Heart right ventricle (tissue), 16 donors: ENCODE measurements at regions of chr5 and their contacts with region 1.

Region 1: DNA sequence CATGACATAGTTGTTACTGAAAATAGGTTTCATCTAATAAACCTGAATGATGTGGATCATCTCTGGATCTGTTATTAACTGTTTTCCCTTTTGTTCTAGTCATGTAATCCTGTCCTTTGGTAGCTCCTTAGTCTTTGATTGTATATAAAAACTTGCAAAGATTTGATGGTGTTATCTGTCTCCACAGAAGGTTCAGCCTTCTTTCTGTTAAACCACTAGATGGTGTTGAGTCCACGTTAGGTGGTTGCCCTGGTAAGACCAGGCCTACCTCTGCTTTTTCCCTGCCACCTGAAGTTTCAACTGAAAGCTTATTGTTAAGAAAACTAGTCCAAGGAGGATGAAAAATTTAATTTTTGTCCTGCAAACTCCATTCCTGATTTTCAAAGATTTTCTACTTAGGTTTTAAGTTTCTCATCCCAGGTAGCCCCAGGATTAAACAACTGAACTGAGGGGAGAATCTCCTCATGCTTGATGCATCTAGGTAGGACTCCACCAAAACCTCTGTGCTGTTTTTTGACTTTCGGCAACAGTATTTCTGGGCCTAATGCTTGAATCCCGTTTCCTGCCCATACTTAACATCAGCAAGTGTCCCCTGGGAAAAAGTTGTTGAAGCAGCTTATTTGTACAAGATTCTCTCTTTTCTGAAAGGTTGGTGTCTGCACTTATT is 68.5 kb downstream of the RICTOR start:
- DNase-seq: no peak
- ATAC-seq: peak in 6 of 8 donors; percentile 71 to 92 (median 82)
- H3K4me3 ChIP-seq: no peak overlapping the region
- H3K27ac ChIP-seq: peak overlapping the region in 4 of 10 donors; percentile 1 to 39 (median 8)
- H3K4me1 ChIP-seq: peaks cover 0 to 25% (median 14%) of the 10 kb centered on the region in 9 donors
- H3K27me3 ChIP-seq: no peaks in the 10 kb centered on the region
- CTCF ChIP-seq: peak in 8 of 9 donors; percentile 7 to 67 (median 46)

Region 2: DNA sequence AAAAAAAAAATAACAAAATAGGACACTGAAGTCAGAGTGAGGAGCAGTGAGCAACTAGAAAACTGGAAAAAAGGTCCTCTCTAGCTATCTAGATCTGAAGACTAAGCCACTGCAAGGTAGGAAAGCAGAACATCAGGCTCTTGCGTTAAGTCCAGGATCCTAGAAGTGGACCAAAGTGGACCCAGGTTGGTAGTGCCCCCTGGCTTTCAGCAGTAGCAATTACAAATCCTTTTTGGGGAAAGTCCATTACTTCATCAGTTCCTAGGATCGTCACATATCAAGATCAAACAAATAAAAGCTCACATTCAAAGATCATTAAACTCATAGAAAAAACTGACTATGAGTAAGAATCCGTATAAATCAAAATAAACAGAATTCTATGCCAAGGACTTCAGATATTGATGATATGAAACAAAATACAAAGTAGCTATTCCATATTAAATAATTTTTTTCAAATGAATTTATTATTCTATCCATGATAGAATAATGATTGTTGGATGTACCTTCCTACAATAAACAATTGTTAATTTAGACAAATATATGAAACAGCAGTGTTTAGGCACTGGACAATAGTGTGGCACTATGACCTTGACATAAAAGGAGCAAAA is 75.0 kb after region 1 on chr5:
- intact Hi-C with region 1: loop called in 5 of 10 experiments (anchors 2 to 5 kb)
- DNase-seq: peak; percentile 27 to 42
- ATAC-seq: peak; percentile 63 to 90 (median 79)
- H3K4me3 ChIP-seq: no peak overlapping the region
- H3K27ac ChIP-seq: no peak overlapping the region
- H3K4me1 ChIP-seq: peaks cover 0 to 23% (median 6%) of the 10 kb centered on the region in 9 donors
- H3K27me3 ChIP-seq: no peaks in the 10 kb centered on the region
- CTCF ChIP-seq: peak; percentile 73 to 94 (median 89)

Region 3: DNA sequence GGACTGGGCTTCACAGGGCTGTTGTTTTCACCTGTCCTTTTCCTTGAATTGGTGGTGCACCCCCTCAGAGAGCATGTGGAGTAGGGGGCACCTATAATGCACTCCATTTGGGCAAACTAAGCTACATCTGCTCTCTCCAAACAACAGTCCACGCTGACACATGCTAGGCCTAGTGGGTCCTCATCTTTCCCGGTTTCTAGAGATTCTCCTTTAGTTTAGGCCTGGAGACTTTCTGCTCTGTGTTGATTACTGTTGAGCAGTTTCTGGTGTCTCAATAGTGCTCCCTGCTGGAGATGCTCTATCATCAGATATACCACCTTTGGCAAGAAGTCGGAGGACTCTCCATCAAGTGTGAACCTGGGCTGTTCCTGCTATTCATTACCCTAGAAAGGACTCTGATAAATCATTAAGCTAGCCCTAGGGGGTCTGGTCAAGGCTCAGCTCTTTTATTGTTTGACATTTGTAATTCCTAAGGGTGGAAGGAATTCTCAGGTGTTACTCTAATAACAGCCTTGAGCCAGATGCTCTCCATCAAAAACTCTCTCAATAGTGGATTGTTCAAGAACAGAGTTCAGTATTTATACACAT is 277.6 kb after region 1 on chr5:
- intact Hi-C with region 1: loop called in 2 of 10 experiments (anchors 5 kb)
- DNase-seq: peak in 1 of 2 donors; percentile 34
- ATAC-seq: peak in 7 of 8 donors; percentile 72 to 83 (median 79)
- H3K4me3 ChIP-seq: no peak overlapping the region
- H3K27ac ChIP-seq: no peak overlapping the region
- H3K4me1 ChIP-seq: peaks cover 0 to 5% (median 0%) of the 10 kb centered on the region in 9 donors
- H3K27me3 ChIP-seq: peaks cover 0 to 10% (median 0%) of the 10 kb centered on the region in 7 donors
- CTCF ChIP-seq: peak; percentile 35 to 73 (median 66)

Region 4: GRCh38 chr5:39570403-39571027 is 564.8 kb after region 1 on chr5:
- intact Hi-C with region 1: no loop called
- DNase-seq: no peak
- ATAC-seq: no peak
- H3K4me3 ChIP-seq: no peak overlapping the region
- H3K27ac ChIP-seq: no peak overlapping the region
- H3K4me1 ChIP-seq: peaks cover 0 to 8% (median 0%) of the 10 kb centered on the region in 9 donors
- H3K27me3 ChIP-seq: peaks cover 0 to 13% (median 0%) of the 10 kb centered on the region in 7 donors
- CTCF ChIP-seq: peak; percentile 42 to 78 (median 65)